PC-3 (cell line): ENCODE measurements at regions of chr12 and their contacts with region 1.

Region 1: DNA sequence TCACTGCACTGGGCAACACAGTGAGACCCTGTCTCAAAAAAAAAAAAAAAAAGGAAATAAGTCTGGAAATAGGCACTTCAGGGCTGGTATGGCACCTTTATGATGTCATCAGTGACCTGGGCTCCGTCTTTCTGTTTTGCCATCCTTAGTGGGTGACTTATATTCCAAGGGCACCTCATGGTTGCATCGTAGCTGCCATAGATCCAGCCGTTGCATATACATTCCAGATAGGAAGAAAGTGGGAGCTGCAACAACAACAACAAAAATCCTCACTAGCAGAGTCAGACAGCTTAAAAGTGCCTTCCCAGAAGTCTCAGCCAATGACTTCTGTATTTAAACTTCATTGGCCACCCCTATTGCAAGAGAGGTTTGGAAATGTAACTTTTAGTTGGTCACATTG is 26.4 kb downstream of the MYL2 start:
- DNase-seq: no peak
- ATAC-seq: no peak
- H3K4me3 ChIP-seq: peak overlapping the region; percentile 53; the same call in 1 of the 2 replicates
- H3K27ac ChIP-seq: no peak overlapping the region
- H3K4me1 ChIP-seq: peaks cover 25% of the 10 kb centered on the region; the same call in 1 of the 2 replicates
- H3K27me3 ChIP-seq: no peaks in the 10 kb centered on the region
- CTCF ChIP-seq: no peak

Region 2: GRCh38 chr12:111174251-111174960 is 280.4 kb after region 1 on chr12:
- CTCF ChIA-PET with region 1: no interaction called
- POLR2A ChIA-PET with region 1: no interaction called
- intact Hi-C with region 1: loop called (anchors 1 kb)
- DNase-seq: peak; percentile 62
- ATAC-seq: peak; percentile 57
- H3K4me3 ChIP-seq: no peak overlapping the region
- H3K27ac ChIP-seq: no peak overlapping the region
- H3K4me1 ChIP-seq: peaks cover 8% of the 10 kb centered on the region
- H3K27me3 ChIP-seq: peaks cover 40% of the 10 kb centered on the region
- CTCF ChIP-seq: peak; percentile 59

Region 3: GRCh38 chr12:111298582-111299436 is 404.9 kb after region 1 on chr12:
- CTCF ChIA-PET with region 1: no interaction called
- POLR2A ChIA-PET with region 1: no interaction called
- intact Hi-C with region 1: loop called (anchors 2 kb)
- DNase-seq: peak; percentile 76
- ATAC-seq: peak; percentile 92
- H3K4me3 ChIP-seq: no peak overlapping the region
- H3K27ac ChIP-seq: no peak overlapping the region
- H3K4me1 ChIP-seq: no peaks in the 10 kb centered on the region
- H3K27me3 ChIP-seq: peaks cover 4% of the 10 kb centered on the region; the same call in 1 of the 2 replicates
- CTCF ChIP-seq: peak; percentile 96

Region 4: DNA sequence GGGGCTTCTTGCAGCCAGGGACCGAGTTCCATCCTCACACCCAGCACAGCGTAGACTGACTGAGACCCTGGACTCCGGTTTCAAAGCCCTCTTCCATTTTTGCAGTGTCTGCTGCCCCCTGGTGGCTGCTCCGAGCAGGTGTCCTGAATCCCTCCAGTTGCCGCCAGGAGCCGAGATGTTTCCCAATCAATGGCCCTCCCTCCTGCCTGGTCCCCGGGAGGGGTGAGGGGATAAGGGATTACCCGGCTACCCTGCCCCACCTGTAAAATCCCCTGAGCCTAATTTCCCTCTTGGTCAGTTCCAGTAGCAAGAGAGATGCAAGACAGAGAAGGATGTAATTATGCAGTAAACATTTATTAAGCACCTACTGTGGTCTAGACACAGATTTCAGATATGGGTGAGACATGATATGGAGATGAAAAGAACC is 419.9 kb after region 1 on chr12:
- CTCF ChIA-PET with region 1: no interaction called
- POLR2A ChIA-PET with region 1: no interaction called
- intact Hi-C with region 1: loop called (anchors 2 kb)
- DNase-seq: peak; percentile 87
- ATAC-seq: peak; percentile 70
- H3K4me3 ChIP-seq: 0 out of 2 replicates have a peak overlapping the region, but pooled peaks have one; percentile 18
- H3K27ac ChIP-seq: no peak overlapping the region
- H3K4me1 ChIP-seq: peaks cover 28% of the 10 kb centered on the region
- H3K27me3 ChIP-seq: no peaks in the 10 kb centered on the region
- CTCF ChIP-seq: peak; percentile 98